ENCODE measurements at regions of chr7 and their contacts with region 1.

Region 1: DNA sequence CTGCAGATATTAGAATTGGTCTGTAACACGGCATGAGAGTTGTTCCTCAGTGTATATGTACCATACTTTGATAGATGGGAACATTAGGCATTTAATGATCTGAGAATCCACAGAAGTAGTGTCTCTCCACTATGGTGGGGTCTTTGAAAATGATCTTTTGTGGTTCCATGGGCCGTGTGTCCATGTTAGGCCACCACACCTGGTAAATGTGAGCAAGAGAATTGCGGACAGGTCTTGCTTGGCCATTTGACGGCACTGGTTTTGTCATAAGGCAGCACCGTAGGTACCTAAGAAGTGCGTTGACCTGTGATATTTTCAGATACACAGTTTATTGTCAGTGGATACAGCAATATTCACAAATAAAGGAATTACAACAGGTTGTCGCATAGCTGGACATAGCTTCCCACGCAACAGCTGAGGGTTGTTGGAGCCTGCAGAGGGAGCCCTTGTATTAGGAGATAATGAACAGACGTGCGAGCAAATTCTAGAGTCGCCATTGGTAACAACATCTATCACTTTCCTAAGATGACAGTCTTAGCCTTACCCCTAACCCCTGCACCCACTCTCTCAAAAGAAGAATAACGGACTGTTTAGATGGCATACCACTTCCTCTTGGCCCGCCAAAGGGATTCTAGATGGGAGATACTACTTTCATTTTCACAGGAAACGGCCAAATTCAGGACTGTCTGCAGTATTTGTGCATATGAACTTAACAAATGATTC is 111.4 kb downstream of the COL28A1 start:
- DNase-seq: peak; percentile 62
- H3K4me3 ChIP-seq: peak overlapping the region; percentile 51 to 55
- H3K27ac ChIP-seq: no peak overlapping the region
- H3K4me1 ChIP-seq: peaks cover 0 to 9% of the 10 kb centered on the region in 2 experiments; a peak in 2 of 4 replicates
- H3K27me3 ChIP-seq: no peaks in the 10 kb centered on the region
- CTCF ChIP-seq: peak; percentile 100
- EP300 ChIP-seq: no peak
- RAD21 ChIP-seq: peak; percentile 99

Region 2: DNA sequence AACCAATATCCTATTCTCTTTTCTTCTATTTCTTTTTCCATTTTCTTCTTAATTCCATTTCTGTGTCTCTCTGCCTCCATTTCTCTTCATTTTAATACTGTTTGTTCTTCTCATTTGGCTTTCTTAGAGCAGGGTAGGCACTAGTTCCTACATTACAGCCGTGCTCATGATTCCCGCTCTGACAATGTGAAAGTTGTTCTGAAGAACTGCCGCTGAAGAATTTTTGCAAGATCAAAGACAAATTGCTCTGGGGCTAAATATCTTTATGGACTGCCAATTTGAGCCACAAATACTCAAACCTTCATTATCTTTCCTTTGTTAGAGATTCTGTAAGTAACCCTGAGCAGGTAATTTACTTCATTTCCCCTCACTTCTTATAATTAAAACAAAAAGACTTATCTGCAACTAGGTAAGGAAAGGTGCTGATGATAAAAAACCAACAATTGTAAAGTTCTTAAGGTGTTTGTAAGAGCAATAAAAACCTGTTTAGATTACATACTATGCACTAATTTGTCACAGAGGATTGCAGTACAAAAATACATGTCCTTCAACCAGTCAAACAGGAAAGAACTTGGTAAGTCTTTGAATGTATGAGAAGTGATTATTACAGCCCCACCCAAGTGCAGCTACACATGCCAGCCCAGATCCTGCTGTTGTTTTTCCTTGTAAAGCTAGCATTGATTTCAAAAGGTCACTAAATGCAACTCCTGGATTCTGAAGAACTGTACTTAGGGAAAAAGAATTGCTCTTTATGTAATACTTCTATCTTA is 16.1 kb before region 1 on chr7:
- CTCF ChIA-PET with region 1: interaction called, 18 read pairs
- POLR2A ChIA-PET with region 1: no interaction called
- DNase-seq: no peak
- H3K4me3 ChIP-seq: no peak overlapping the region
- H3K27ac ChIP-seq: no peak overlapping the region
- H3K4me1 ChIP-seq: no peaks in the 10 kb centered on the region
- H3K27me3 ChIP-seq: no peaks in the 10 kb centered on the region
- CTCF ChIP-seq: no peak
- EP300 ChIP-seq: no peak
- RAD21 ChIP-seq: no peak

Region 3: GRCh38 chr7:7438851-7439250 is 14.5 kb after region 1 on chr7:
- CTCF ChIA-PET with region 1: interaction called, 43 read pairs
- POLR2A ChIA-PET with region 1: no interaction called
- DNase-seq: no peak
- H3K4me3 ChIP-seq: no peak overlapping the region
- H3K27ac ChIP-seq: peak overlapping the region; percentile 53 to 86
- H3K4me1 ChIP-seq: peaks cover 3 to 4% of the 10 kb centered on the region in 2 experiments; a peak in 3 of 4 replicates
- H3K27me3 ChIP-seq: no peaks in the 10 kb centered on the region
- CTCF ChIP-seq: no peak
- EP300 ChIP-seq: peak in 1 of 2 experiments; percentile 74; a peak in 1 of 4 replicates
- RAD21 ChIP-seq: no peak

Region 4: GRCh38 chr7:7521259-7521658 is 96.9 kb after region 1 on chr7:
- CTCF ChIA-PET with region 1: interaction called, 17 read pairs
- POLR2A ChIA-PET with region 1: no interaction called
- DNase-seq: no peak
- H3K4me3 ChIP-seq: no peak overlapping the region
- H3K27ac ChIP-seq: no peak overlapping the region
- H3K4me1 ChIP-seq: no peaks in the 10 kb centered on the region
- H3K27me3 ChIP-seq: no peaks in the 10 kb centered on the region
- CTCF ChIP-seq: no peak
- EP300 ChIP-seq: no peak
- RAD21 ChIP-seq: no peak

Region 5: GRCh38 chr7:7535691-7536090 is 111.4 kb after region 1 on chr7 and contains the start of gene COL28A1:
- CTCF ChIA-PET with region 1: interaction called, 62 read pairs
- POLR2A ChIA-PET with region 1: no interaction called
- DNase-seq: no peak
- H3K4me3 ChIP-seq: no peak within 1 kb of the TSS
- H3K27ac ChIP-seq: no peak within 1 kb of the TSS
- H3K4me1 ChIP-seq: no peaks in the 10 kb centered on the region; a peak in 1 of 4 replicates
- H3K27me3 ChIP-seq: no peaks in the 10 kb centered on the region
- CTCF ChIP-seq: no peak
- EP300 ChIP-seq: no peak
- RAD21 ChIP-seq: no peak
- polyA plus RNA-seq, gene COL28A1: 0.08 TPM in 1 of 2 replicates, not detected in the other

Region 6: GRCh38 chr7:7542251-7542835 is 118.0 kb after region 1 on chr7:
- CTCF ChIA-PET with region 1: interaction called, 62 read pairs
- POLR2A ChIA-PET with region 1: no interaction called
- DNase-seq: no peak
- H3K4me3 ChIP-seq: no peak overlapping the region
- H3K27ac ChIP-seq: no peak overlapping the region
- H3K4me1 ChIP-seq: no peaks in the 10 kb centered on the region
- H3K27me3 ChIP-seq: no peaks in the 10 kb centered on the region
- CTCF ChIP-seq: no peak
- EP300 ChIP-seq: no peak
- RAD21 ChIP-seq: no peak